Activated T-helper 2 cell treated with anti-CD3 and anti-CD28 coated beads, Interferon-gamma antibody, Interleukin-2, Interleukin-4, amounts not matched to agents 10 μg/mL and 5 μg/mL and 100 μg/mL, durations not matched to agents 14 hours and 24 hours and 36 hours (primary cell): ENCODE measurements at regions of chr18 and their contacts with region 1.

Region 1: GRCh38 chr18:12890506-12890905 is 6.5 kb upstream of the PTPN2 start:
- DNase-seq: no peak
- H3K4me3 Mint-ChIP-seq: no peak overlapping the region
- H3K27ac Mint-ChIP-seq: no peak overlapping the region
- H3K4me1 Mint-ChIP-seq: peaks cover 12% of the 10 kb centered on the region
- H3K27me3 Mint-ChIP-seq: peaks cover 4% of the 10 kb centered on the region

Region 2: DNA sequence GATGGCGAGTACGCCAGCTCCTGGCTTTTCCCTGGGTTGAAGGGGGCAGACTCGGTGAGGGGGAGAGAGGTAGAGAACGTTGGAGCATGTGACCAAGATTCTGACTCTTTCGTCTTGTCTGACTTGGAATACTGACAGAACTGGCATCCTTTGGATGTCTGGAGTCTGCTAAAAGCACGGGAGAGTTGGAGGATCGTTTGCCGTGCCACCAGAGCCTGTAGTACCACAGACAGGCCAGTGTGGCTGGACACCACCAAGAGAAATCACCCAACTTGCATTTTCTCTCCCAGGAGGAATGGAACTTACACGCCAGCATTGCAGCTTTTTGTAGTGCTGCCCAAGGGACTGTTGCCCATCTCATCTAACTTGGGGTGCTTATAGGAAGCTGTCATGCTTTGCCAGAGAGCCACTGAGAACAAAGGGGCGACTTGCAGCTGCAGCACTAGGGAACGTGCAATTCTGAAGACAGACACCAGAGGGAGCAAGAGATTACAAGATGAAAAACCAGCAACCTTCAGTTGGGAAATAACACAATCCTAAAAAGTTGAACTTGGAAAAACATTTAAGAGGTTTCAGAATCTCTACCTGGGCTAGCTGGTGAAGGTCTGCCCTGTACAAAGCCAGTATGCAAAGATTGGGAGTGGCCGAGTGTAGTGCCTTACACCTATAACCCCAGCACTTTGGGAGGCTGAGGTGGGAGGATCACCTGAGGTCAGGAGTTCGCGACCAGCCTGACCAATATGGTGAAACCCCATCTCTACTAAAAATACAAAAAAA is 163.5 kb before region 1 on chr18:
- intact Hi-C with region 1: loop called (anchors 1 kb)
- DNase-seq: peak; percentile 44
- H3K4me3 Mint-ChIP-seq: no peak overlapping the region
- H3K27ac Mint-ChIP-seq: no peak overlapping the region
- H3K4me1 Mint-ChIP-seq: peaks cover 4% of the 10 kb centered on the region
- H3K27me3 Mint-ChIP-seq: no peaks in the 10 kb centered on the region

Region 3: GRCh38 chr18:12744103-12744502 is 146.4 kb before region 1 on chr18:
- intact Hi-C with region 1: loop called (anchors 1 kb)
- DNase-seq: no peak
- H3K4me3 Mint-ChIP-seq: no peak overlapping the region
- H3K27ac Mint-ChIP-seq: no peak overlapping the region
- H3K4me1 Mint-ChIP-seq: peaks cover 12% of the 10 kb centered on the region
- H3K27me3 Mint-ChIP-seq: no peaks in the 10 kb centered on the region

Region 4: GRCh38 chr18:12838178-12838634 is 52.3 kb before region 1 on chr18:
- intact Hi-C with region 1: no loop called
- DNase-seq: no peak
- H3K4me3 Mint-ChIP-seq: peak overlapping the region; percentile 68
- H3K27ac Mint-ChIP-seq: peak overlapping the region; percentile 80
- H3K4me1 Mint-ChIP-seq: peaks cover 61% of the 10 kb centered on the region
- H3K27me3 Mint-ChIP-seq: no peaks in the 10 kb centered on the region